IMR-90 (cell line): ENCODE measurements at regions of chr3 and their contacts with region 1.

Region 1: DNA sequence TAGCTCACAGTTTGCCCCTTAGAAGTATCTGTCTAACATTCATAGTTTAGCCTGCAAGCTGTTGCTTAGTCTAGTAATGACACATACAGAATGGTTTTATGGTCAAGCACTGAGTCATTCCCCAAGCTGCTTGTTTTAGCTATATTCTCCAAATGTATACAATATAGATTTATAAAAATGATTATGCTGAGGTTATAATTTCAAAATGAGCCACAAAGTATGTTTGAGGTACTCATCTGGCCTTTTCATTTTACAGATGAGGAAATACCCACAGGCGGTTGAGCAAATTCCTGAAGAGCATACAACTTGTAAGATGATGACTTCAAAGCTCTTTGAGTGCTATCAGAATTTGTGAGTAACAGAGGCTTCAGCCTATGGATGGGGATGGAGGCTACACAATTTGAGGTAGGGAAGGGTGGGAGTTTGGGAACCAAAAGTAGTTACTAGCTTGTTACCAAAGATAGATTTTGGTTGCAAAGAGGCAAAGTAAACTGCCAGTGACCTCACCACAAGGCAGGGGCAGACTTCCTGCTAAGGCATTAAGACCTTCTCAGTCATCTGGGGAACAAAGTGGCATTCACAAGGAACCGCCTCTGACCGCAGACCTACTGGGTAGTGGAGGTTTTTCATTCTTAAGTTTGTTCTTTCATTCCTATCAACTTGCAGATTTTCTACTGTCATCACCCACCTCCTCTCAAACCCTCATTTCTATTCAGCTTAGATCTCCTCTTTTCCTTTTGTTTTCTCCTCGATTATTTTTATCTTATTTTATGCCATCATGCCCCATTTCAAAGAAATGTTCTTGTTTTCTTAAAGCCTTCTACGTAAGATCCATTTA is 257.2 kb upstream of the NECTIN3 start:
- DNase-seq: peak; percentile 98
- ATAC-seq: peak; percentile 90
- H3K4me3 ChIP-seq: peak overlapping the region; percentile 32; the same call in 1 of the 2 replicates
- H3K27ac ChIP-seq: peak overlapping the region; percentile 96
- H3K4me1 ChIP-seq: peaks cover 8% of the 10 kb centered on the region
- H3K27me3 ChIP-seq: no peaks in the 10 kb centered on the region
- CTCF ChIP-seq: no peak
- POLR2A ChIP-seq: no peak
- RAD21 ChIP-seq: peak; percentile 17; the same call in 1 of the 2 replicates

Region 2: GRCh38 chr3:109532257-109533216 is 1281.9 kb before region 1 on chr3:
- CTCF ChIA-PET with region 1: no interaction called
- POLR2A ChIA-PET with region 1: no interaction called
- dilution Hi-C with region 1: no loop called
- in situ Hi-C with region 1: no loop called
- intact Hi-C with region 1: loop called (anchors 10 kb)
- DNase-seq: peak; percentile 83
- ATAC-seq: peak; percentile 96
- H3K4me3 ChIP-seq: no peak overlapping the region
- H3K27ac ChIP-seq: no peak overlapping the region
- H3K4me1 ChIP-seq: no peaks in the 10 kb centered on the region
- H3K27me3 ChIP-seq: no peaks in the 10 kb centered on the region
- CTCF ChIP-seq: peak; percentile 72
- POLR2A ChIP-seq: no peak
- RAD21 ChIP-seq: peak; percentile 80

Region 3: DNA sequence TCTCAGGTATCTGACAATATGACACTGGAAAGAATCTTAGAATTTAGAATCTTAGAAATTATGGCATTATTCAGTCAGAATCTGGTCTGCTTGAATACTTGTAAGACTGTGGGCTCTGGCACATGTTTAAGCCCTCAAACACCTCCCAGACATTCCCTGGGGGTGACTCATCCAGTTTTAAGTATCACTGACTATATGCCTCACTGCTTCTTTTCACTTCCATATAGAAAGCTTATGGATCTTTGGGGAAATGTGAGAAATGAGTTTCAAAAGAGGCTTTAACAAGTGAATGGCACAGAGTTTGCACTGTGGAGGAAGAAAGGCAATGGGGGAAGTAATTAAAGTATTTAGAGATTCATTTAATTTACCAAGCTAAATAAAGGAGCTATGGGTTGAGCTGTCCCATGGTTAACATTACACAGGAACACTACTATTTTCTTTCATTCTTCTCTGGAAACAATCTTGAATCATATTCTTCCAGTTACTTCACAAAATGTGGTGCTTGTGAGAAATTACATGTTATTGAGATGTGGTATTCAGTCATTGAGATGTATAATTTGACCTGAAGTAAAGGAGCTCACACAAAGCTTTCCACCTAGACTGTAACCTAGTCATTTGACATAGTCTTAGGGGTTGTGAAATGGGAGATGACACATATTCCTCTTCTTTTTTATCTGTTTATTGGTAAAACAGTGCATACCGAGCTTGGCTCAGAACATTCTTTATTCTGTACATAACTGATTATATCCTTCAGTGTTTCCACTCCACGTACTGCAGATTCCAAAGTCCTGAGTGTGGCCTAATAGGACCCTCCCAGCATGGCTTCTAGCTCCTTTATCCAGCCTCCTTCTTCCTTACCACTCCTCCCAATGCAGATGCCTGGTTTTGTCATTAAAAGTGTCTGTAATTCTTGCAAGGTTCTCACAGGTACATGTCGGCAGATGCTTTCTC is 287.3 kb before region 1 on chr3:
- CTCF ChIA-PET with region 1: no interaction called
- POLR2A ChIA-PET with region 1: no interaction called
- dilution Hi-C with region 1: no loop called
- in situ Hi-C with region 1: no loop called
- intact Hi-C with region 1: loop called (anchors 2 kb)
- DNase-seq: peak; percentile 95
- ATAC-seq: peak; percentile 90
- H3K4me3 ChIP-seq: no peak overlapping the region
- H3K27ac ChIP-seq: peak overlapping the region; percentile 67
- H3K4me1 ChIP-seq: peaks cover 15% of the 10 kb centered on the region
- H3K27me3 ChIP-seq: no peaks in the 10 kb centered on the region
- CTCF ChIP-seq: no peak
- POLR2A ChIP-seq: no peak; the same call in 1 of the 2 replicates
- RAD21 ChIP-seq: no peak; the same call in 1 of the 2 replicates

Region 4: GRCh38 chr3:110576962-110577361 is 237.4 kb before region 1 on chr3:
- CTCF ChIA-PET with region 1: no interaction called
- POLR2A ChIA-PET with region 1: no interaction called
- dilution Hi-C with region 1: no loop called
- in situ Hi-C with region 1: no loop called
- intact Hi-C with region 1: loop called (anchors 10 kb)
- DNase-seq: peak; percentile 92
- ATAC-seq: peak; percentile 70
- H3K4me3 ChIP-seq: no peak overlapping the region
- H3K27ac ChIP-seq: peak overlapping the region; percentile 74
- H3K4me1 ChIP-seq: peaks cover 18% of the 10 kb centered on the region
- H3K27me3 ChIP-seq: no peaks in the 10 kb centered on the region
- CTCF ChIP-seq: no peak
- POLR2A ChIP-seq: no peak
- RAD21 ChIP-seq: peak; percentile 3; the same call in 1 of the 2 replicates

Region 5: GRCh38 chr3:110773413-110773954 is 40.9 kb before region 1 on chr3:
- CTCF ChIA-PET with region 1: no interaction called
- POLR2A ChIA-PET with region 1: no interaction called
- dilution Hi-C with region 1: no loop called
- in situ Hi-C with region 1: no loop called
- intact Hi-C with region 1: loop called (anchors 1 kb)
- DNase-seq: peak; percentile 98
- ATAC-seq: peak; percentile 92
- H3K4me3 ChIP-seq: no peak overlapping the region
- H3K27ac ChIP-seq: peak overlapping the region; percentile 80
- H3K4me1 ChIP-seq: peaks cover 7% of the 10 kb centered on the region; the same call in 1 of the 2 replicates
- H3K27me3 ChIP-seq: no peaks in the 10 kb centered on the region
- CTCF ChIP-seq: no peak
- POLR2A ChIP-seq: no peak
- RAD21 ChIP-seq: no peak; the same call in 1 of the 2 replicates